ENCODE measurements at regions of chr11 and their contacts with region 1.

Region 1: GRCh38 chr11:111540114-111540936 is at the start of gene LAYN:
- DNase-seq: no peak
- H3K4me3 ChIP-seq: peak within 1 kb of the TSS; percentile 74
- H3K27ac ChIP-seq: peak within 1 kb of the TSS; percentile 92
- H3K27me3 ChIP-seq: no peaks in the 10 kb centered on the region
- CTCF ChIP-seq: no peak
- polyA plus RNA-seq, gene LAYN: 110 and 119 TPM in 2 replicates

Region 2: DNA sequence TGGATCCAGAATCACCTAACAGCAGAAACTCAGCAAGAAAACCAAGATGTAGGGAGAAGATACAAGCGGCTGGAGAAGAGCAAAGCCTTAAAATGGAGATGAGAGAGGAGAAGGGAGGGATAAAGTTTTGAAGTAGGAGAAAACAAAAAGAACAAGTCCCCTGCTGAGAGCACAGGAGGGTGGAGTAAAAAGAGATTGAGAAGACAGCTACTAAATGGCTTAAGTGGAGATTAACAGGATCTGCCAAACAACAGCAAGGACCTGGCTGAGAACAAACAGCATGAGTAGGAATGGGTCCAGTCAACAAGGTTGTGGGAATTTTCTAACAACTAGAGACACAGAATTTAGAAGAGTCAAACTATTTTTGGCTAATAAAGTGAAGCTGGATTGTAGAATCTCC is 46.3 kb before region 1 on chr11:
- CTCF ChIA-PET with region 1: no interaction called
- POLR2A ChIA-PET with region 1: no interaction called
- DNase-seq: no peak
- H3K4me3 ChIP-seq: no peak overlapping the region
- H3K27ac ChIP-seq: no peak overlapping the region
- H3K27me3 ChIP-seq: no peaks in the 10 kb centered on the region
- CTCF ChIP-seq: no peak

Region 3: GRCh38 chr11:111557425-111558111 is 17.2 kb after region 1 on chr11:
- CTCF ChIA-PET with region 1: no interaction called
- POLR2A ChIA-PET with region 1: interaction called, 16 read pairs
- DNase-seq: peak; percentile 95
- H3K4me3 ChIP-seq: no peak overlapping the region
- H3K27ac ChIP-seq: peak overlapping the region; percentile 99
- H3K27me3 ChIP-seq: no peaks in the 10 kb centered on the region
- CTCF ChIP-seq: peak; percentile 27

Measured in AG04450 (cell line).